Panc1 (cell line): ENCODE measurements at regions of chr3 and their contacts with region 1.

Region 1: GRCh38 chr3:105431200-105431599 is 64.5 kb downstream of the ALCAM start:
- DNase-seq: no peak
- ATAC-seq: no peak
- H3K4me3 ChIP-seq: no peak overlapping the region
- H3K27ac ChIP-seq: no peak overlapping the region
- H3K4me1 ChIP-seq: no peaks in the 10 kb centered on the region
- H3K27me3 ChIP-seq: no peaks in the 10 kb centered on the region
- CTCF ChIP-seq: no peak

Region 2: GRCh38 chr3:104388619-104389018 is 1042.6 kb before region 1 on chr3:
- CTCF ChIA-PET with region 1: no interaction called
- POLR2A ChIA-PET with region 1: no interaction called
- in situ Hi-C with region 1: no loop called
- intact Hi-C with region 1: no loop called
- DNase-seq: no peak
- ATAC-seq: no peak
- H3K4me3 ChIP-seq: no peak overlapping the region
- H3K27ac ChIP-seq: no peak overlapping the region
- H3K4me1 ChIP-seq: no peaks in the 10 kb centered on the region
- H3K27me3 ChIP-seq: no peaks in the 10 kb centered on the region
- CTCF ChIP-seq: no peak

Region 3: GRCh38 chr3:105327662-105328337 is 103.4 kb before region 1 on chr3:
- CTCF ChIA-PET with region 1: interaction called, 10 read pairs
- POLR2A ChIA-PET with region 1: no interaction called
- in situ Hi-C with region 1: no loop called
- intact Hi-C with region 1: no loop called
- DNase-seq: no peak
- ATAC-seq: no peak
- H3K4me3 ChIP-seq: no peak overlapping the region
- H3K27ac ChIP-seq: no peak overlapping the region
- H3K4me1 ChIP-seq: no peaks in the 10 kb centered on the region
- H3K27me3 ChIP-seq: no peaks in the 10 kb centered on the region
- CTCF ChIP-seq: no peak